Ascending aorta (tissue), 2 donors: ENCODE measurements at regions of chr6 and their contacts with region 1.

Region 1: GRCh38 chr6:2634139-2634964 is 116.4 kb downstream of the MYLK4 start:
- DNase-seq: peak; percentile 57 to 94
- H3K4me3 ChIP-seq: peak overlapping the region; percentile 46 to 58
- H3K27ac ChIP-seq: peak overlapping the region; percentile 95 to 96
- H3K4me1 ChIP-seq: peaks cover 0 to 42% of the 10 kb centered on the region in 2 donors
- H3K27me3 ChIP-seq: no peaks in the 10 kb centered on the region
- CTCF ChIP-seq: peak; percentile 98 to 99 (median 99)

Region 2: GRCh38 chr6:1695546-1696462 is 938.5 kb before region 1 on chr6:
- intact Hi-C with region 1: loop called (anchors 5 kb)
- DNase-seq: peak in 1 of 2 donors; percentile 86
- H3K4me3 ChIP-seq: peak overlapping the region in 1 of 2 donors; percentile 32
- H3K27ac ChIP-seq: peak overlapping the region; percentile 84 to 87
- H3K4me1 ChIP-seq: peaks cover 15 to 41% of the 10 kb centered on the region in 2 donors
- H3K27me3 ChIP-seq: no peaks in the 10 kb centered on the region
- CTCF ChIP-seq: no peak

Region 3: GRCh38 chr6:2162089-2162465 is 472.3 kb before region 1 on chr6:
- intact Hi-C with region 1: loop called (anchors 5 kb)
- DNase-seq: no peak
- H3K4me3 ChIP-seq: no peak overlapping the region
- H3K27ac ChIP-seq: peak overlapping the region; percentile 55 to 66
- H3K4me1 ChIP-seq: peaks cover 0 to 24% of the 10 kb centered on the region in 2 donors
- H3K27me3 ChIP-seq: no peaks in the 10 kb centered on the region
- CTCF ChIP-seq: no peak

Region 4: GRCh38 chr6:2378891-2379652 is 255.3 kb before region 1 on chr6:
- intact Hi-C with region 1: no loop called
- DNase-seq: no peak
- H3K4me3 ChIP-seq: no peak overlapping the region
- H3K27ac ChIP-seq: no peak overlapping the region
- H3K4me1 ChIP-seq: peaks cover 0 to 14% of the 10 kb centered on the region in 2 donors
- H3K27me3 ChIP-seq: no peaks in the 10 kb centered on the region
- CTCF ChIP-seq: no peak

Region 5: DNA sequence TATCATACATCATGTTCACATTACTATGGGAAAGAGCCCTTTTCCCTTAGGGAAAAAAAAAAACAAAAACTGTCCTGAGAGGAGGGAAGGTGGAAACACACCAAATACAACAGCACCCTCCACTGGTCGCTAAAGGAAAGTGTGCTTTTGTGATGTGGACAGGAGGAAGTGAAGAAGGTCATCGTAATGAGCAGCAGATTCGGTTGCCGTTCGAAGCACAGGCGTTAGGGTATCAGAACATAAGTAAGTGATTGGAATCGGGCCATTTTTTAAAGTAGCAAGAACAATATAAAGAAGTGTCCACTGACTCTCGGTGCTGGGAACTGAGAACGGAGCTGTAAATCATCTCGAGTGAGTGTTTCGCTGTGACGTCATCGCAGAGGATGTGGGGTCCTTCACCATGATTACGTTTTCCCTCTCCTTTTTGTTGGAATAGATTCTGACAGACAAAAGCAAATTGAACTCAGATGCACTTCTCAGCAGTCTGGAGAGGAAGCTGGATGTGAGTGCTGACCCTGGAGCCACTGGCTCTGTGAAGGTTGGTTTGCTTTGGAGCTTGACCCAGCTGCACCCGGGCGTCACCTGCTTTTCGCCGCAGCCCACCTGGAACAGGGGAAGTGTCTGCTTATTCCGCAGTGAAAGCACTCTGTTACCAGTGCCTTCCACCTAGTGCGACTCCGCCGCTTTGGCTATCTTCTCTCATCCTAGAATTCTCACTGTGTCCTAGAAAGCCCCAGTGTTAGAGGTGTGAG is 185.4 kb before region 1 on chr6:
- intact Hi-C with region 1: loop called (anchors 2 kb)
- DNase-seq: peak in 1 of 2 donors; percentile 76
- H3K4me3 ChIP-seq: peak overlapping the region; percentile 42 to 62
- H3K27ac ChIP-seq: peak overlapping the region; percentile 56 to 59
- H3K4me1 ChIP-seq: peaks cover 3 to 11% of the 10 kb centered on the region in 2 donors
- H3K27me3 ChIP-seq: no peaks in the 10 kb centered on the region
- CTCF ChIP-seq: peak; percentile 45 to 84 (median 76)

Region 6: DNA sequence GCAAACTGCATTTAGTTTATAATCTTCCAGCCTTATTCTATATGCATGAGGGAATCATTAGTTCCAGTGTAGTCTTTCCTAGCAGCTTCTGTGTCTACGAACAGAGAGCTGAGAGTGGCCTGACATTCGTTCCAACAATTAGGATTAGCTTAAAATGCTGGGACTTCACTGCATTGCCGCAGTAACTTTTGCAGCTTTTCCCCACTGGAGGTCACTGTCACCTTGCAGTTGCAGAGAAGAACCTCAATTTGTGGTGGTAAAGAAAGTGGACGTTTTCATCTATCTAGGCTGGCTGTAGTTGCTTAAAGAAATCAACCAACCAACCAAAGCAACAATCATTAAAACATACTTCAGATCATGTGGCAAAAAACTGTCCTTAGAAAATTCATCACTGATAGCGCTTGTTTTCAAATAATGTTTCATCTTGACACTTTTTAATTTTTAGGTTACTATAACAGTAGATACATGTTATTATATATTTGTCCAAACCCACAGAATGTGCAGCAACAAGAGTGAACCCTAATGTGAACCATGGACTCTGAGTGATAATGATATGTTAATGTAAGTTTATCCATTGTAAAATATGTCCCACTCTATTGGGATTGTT is 104.1 kb after region 1 on chr6:
- intact Hi-C with region 1: no loop called
- DNase-seq: peak in 1 of 2 donors; percentile 78
- H3K4me3 ChIP-seq: no peak overlapping the region
- H3K27ac ChIP-seq: no peak overlapping the region
- H3K4me1 ChIP-seq: peaks cover 0 to 6% of the 10 kb centered on the region in 2 donors
- H3K27me3 ChIP-seq: no peaks in the 10 kb centered on the region
- CTCF ChIP-seq: peak; percentile 64 to 74 (median 68)

Region 7: DNA sequence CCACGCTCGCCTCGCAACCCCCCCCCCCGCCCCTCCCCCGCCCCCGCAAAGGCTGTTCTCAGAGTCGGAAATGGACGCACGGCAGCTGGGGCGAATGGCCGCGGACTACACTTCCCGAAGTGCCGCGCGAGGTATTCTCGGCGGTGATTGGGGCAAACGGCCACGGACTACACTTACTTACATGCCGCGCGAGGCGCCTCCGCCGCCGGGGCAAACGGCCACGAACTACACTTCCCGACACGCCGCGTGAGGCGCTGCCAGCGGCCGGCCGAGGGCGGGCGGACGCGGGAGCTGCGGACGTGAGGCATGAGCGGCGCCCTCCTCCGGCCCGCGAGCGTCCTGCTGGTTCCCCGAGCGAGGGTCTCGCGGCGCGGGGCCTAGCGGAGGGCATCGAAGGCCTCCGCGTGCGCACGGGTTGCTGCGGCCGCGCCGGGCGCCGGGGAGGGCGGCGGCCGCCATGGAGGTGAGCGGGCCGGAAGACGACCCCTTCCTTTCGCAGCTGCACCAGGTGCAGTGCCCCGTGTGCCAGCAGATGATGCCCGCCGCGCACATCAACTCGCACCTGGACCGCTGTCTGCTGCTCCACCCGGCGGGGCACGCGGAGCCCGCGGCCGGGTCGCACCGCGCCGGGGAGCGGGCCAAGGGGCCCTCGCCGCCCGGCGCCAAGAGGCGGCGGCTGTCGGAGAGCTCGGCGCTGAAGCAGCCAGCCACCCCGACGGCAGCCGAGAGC is 131.0 kb after region 1 on chr6 and contains the start of gene WRNIP1:
- intact Hi-C with region 1: loop called (anchors 5 kb)
- DNase-seq: peak; percentile 98 to 100
- H3K4me3 ChIP-seq: peak within 1 kb of the TSS; percentile 93
- H3K27ac ChIP-seq: peak within 1 kb of the TSS; percentile 92 to 99
- H3K4me1 ChIP-seq: peaks cover 6 to 17% of the 10 kb centered on the region in 2 donors
- H3K27me3 ChIP-seq: no peaks in the 10 kb centered on the region
- CTCF ChIP-seq: peak; percentile 47 to 93 (median 58)
- total RNA-seq, gene WRNIP1: 100 TPM